Testis (tissue), 5 donors: ENCODE measurements at regions of chr22 and their contacts with region 1.

Region 1: GRCh38 chr22:17164392-17165024 is 5.4 kb upstream of the HDHD5 start:
- DNase-seq: no peak
- H3K4me3 ChIP-seq: no peak overlapping the region
- H3K27ac ChIP-seq: no peak overlapping the region
- H3K4me1 ChIP-seq: peaks cover 7% of the 10 kb centered on the region
- H3K27me3 ChIP-seq: no peaks in the 10 kb centered on the region
- CTCF ChIP-seq: no peak
- POLR2A ChIP-seq: no peak

Region 2: GRCh38 chr22:17084554-17085276 is 79.8 kb before region 1 on chr22 and contains the start of gene IL17RA:
- intact Hi-C with region 1: loop called (anchors 10 kb)
- DNase-seq: peak; percentile 87
- H3K4me3 ChIP-seq: peak within 1 kb of the TSS; percentile 85 to 86
- H3K27ac ChIP-seq: peak within 1 kb of the TSS; percentile 74 to 88
- H3K4me1 ChIP-seq: peaks cover 7% of the 10 kb centered on the region
- H3K27me3 ChIP-seq: no peaks in the 10 kb centered on the region
- CTCF ChIP-seq: no peak
- POLR2A ChIP-seq: peak; percentile 17
- total RNA-seq, gene IL17RA: 8.3 to 12.8 TPM